ENCODE measurements at regions of chr12 and their contacts with region 1.

Region 1: GRCh38 chr12:101280006-101280505 is at the start of gene UTP20:
- DNase-seq: peak; percentile 92
- ATAC-seq: peak; percentile 100
- H3K4me3 Mint-ChIP-seq: peak within 1 kb of the TSS; percentile 96
- H3K27ac Mint-ChIP-seq: peak within 1 kb of the TSS; percentile 88
- H3K4me1 Mint-ChIP-seq: peaks cover 8% of the 10 kb centered on the region
- H3K27me3 Mint-ChIP-seq: peaks cover 18% of the 10 kb centered on the region
- CTCF ChIP-seq: no peak
- total RNA-seq, gene UTP20: 26.1 and 32.9 TPM in 2 replicates

Region 2: GRCh38 chr12:100266835-100267618 is 1013.0 kb before region 1 on chr12 and contains the starts of genes DEPDC4 and SCYL2:
- CTCF ChIA-PET with region 1: no interaction called
- POLR2A ChIA-PET with region 1: no interaction called
- intact Hi-C with region 1: loop called (anchors 1 kb)
- DNase-seq: peak; percentile 90
- ATAC-seq: peak; percentile 93
- H3K4me3 Mint-ChIP-seq: peak within 1 kb of the TSS; percentile 99
- H3K27ac Mint-ChIP-seq: peak within 1 kb of the TSS; percentile 95
- H3K4me1 Mint-ChIP-seq: peaks cover 34% of the 10 kb centered on the region
- H3K27me3 Mint-ChIP-seq: no peaks in the 10 kb centered on the region
- CTCF ChIP-seq: no peak
- total RNA-seq, gene DEPDC4: 0.49 and 0.81 TPM in 2 replicates
- total RNA-seq, gene SCYL2: 34.7 and 38.7 TPM in 2 replicates

Region 3: DNA sequence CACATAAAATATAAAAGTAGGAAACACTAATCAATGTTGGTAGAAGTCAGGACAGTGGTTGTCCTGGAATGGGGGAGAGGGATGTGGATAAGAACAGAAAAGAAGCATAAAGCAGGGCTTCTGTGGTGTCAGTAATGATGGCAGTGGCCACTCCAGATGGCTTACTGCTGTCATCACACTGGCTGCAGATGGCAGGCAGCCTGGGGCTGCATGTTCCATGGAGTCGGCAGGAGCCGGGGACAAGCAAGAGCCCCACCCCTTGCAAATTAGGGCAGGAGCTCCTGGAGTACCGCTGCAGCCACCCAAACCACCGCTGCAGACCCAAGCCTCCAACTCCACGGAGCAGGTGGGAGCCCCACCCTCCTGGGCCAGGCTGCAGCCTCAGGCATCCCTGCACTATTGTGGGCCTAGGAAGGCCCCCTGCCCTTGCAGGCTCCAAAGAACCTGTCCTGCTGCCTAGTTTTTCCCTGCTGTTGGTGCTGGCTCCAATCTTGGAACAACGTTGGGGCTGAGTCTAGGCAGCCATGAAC is 41.2 kb before region 1 on chr12:
- CTCF ChIA-PET with region 1: no interaction called
- POLR2A ChIA-PET with region 1: no interaction called
- intact Hi-C with region 1: no loop called
- DNase-seq: no peak
- ATAC-seq: no peak
- H3K4me3 Mint-ChIP-seq: no peak overlapping the region
- H3K27ac Mint-ChIP-seq: no peak overlapping the region
- H3K4me1 Mint-ChIP-seq: no peaks in the 10 kb centered on the region
- H3K27me3 Mint-ChIP-seq: peaks cover 1% of the 10 kb centered on the region
- CTCF ChIP-seq: no peak

Region 4: DNA sequence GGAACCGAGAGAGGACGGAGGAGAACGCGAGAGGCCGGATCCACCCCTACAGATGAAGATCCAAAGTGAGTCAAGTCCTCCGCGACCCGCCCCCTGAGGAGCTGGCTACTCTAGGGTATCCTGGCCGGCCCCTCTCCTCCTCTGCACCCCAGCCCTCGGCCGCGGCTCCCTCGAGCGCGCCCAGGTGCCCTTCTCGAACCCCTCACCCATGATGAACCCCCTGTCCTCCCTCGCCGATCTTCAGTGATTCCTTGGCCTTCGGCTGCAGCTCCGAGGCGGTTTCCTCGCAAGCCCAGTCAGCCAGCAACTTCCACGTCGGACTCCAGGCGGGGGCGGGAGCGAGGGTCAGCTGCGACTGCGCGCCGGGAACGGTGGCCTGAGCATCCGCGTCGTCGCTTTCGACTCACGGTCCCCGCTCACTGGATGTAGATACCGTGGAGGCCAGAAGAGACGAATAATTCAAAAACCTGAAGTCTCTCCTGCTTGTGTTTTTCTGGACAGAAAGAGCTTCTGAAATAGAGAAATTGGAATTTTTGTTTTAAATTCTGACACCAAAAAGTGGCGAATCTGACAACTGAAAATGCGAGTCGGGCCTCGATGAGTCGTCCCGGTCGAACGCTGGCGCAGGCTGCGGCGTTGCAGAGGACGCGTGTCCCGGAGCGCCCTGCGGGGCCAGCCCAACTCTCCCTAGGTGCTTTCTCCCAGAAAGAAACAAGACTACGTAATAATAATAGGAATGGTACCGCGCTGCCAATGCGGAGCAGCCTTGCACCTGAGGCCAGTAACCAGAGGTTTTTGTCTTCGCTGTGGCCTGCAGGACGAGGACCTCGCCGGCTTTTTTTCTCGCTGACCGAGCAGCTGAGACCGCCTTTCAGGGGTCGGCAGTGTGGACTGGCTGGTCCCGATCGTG is 127.6 kb after region 1 on chr12 and contains the start of gene ARL1:
- CTCF ChIA-PET with region 1: interaction called, 3 read pairs
- POLR2A ChIA-PET with region 1: interaction called, 6 read pairs
- intact Hi-C with region 1: loop called (anchors 1 kb)
- DNase-seq: peak; percentile 74
- ATAC-seq: peak; percentile 87
- H3K4me3 Mint-ChIP-seq: peak within 1 kb of the TSS; percentile 99
- H3K27ac Mint-ChIP-seq: peak within 1 kb of the TSS; percentile 97
- H3K4me1 Mint-ChIP-seq: peaks cover 24% of the 10 kb centered on the region
- H3K27me3 Mint-ChIP-seq: no peaks in the 10 kb centered on the region
- CTCF ChIP-seq: no peak
- total RNA-seq, gene ARL1: 45.4 and 49.5 TPM in 2 replicates

Region 5: DNA sequence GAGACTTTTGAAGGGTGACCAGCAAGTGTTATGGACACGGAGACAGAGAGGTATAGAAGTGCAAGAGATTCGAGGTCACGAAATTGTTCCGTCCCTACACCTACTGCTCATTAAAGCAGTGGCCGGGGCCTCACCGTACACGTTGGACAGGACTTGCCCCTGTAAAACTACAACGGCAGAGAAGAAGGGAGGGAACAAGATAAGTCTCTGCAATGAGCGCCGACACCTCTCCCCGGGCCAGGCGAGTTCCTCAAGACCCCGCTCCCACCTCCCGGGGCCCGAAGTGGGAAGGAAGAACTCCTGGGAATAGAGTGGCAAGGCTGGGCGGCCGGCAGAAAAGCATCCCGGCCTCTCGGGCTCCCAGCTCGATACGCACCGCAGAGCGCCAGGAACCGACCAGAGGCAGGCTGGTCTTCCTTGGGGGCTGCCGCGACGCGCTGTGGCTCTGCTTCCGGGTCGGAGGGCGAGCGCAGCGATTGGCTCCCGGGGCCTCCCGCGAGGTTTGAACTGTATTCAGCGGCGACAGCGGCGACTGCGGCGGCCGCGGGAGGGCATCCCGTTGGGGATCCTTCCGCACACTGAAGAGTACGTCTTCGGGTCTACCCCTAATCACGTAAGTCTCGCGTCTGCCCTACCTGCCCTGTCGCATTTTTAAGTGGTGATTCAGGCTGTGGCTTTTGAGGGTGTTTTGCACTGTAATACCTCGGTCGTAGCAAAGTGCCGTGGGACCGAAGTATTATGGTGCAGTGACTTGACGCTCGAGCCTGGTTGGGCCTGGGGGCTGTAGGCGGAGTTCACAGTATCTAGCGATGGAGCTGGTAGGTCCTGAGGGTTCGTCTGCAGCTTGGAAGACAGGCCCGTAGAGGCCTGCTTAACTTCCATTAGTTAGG is 839.9 kb after region 1 on chr12 and contains the starts of genes NUP37 and PARPBP:
- CTCF ChIA-PET with region 1: no interaction called
- POLR2A ChIA-PET with region 1: no interaction called
- intact Hi-C with region 1: loop called (anchors 2 kb)
- DNase-seq: peak; percentile 90
- ATAC-seq: peak; percentile 98
- H3K4me3 Mint-ChIP-seq: peak within 1 kb of the TSS; percentile 95
- H3K27ac Mint-ChIP-seq: peak within 1 kb of the TSS; percentile 91
- H3K4me1 Mint-ChIP-seq: peaks cover 12% of the 10 kb centered on the region
- H3K27me3 Mint-ChIP-seq: no peaks in the 10 kb centered on the region
- CTCF ChIP-seq: no peak
- total RNA-seq, gene NUP37: 27.0 and 29.9 TPM in 2 replicates
- total RNA-seq, gene PARPBP: 4.6 and 5.0 TPM in 2 replicates

Measured in activated B cell treated with CpG ODN at 0.5 μM for 24 hours (primary cell).